CD8-positive, alpha-beta T cell (primary cell): ENCODE measurements at regions of chr21 and their contacts with region 1.

Region 1: GRCh38 chr21:31974454-31974985 is 101.7 kb downstream of the HUNK start:
- DNase-seq: peak; percentile 1 to 76 (median 41)
- ATAC-seq: peak; percentile 95
- H3K4me3 ChIP-seq: no peak overlapping the region
- H3K4me3 Mint-ChIP-seq: peak overlapping the region; percentile 50
- H3K27ac ChIP-seq: no peak overlapping the region
- H3K27ac Mint-ChIP-seq: peak overlapping the region; percentile 80
- H3K4me1 ChIP-seq: peaks cover 22% of the 10 kb centered on the region
- H3K4me1 Mint-ChIP-seq: peaks cover 30% of the 10 kb centered on the region
- H3K27me3 ChIP-seq: no peaks in the 10 kb centered on the region
- H3K27me3 Mint-ChIP-seq: no peaks in the 10 kb centered on the region
- CTCF ChIP-seq: no peak

Region 2: GRCh38 chr21:31927689-31928353 is 46.7 kb before region 1 on chr21:
- CTCF ChIA-PET with region 1: interaction called, 3 read pairs
- POLR2A ChIA-PET with region 1: no interaction called
- intact Hi-C with region 1: loop called in 1 of 2 experiments (anchors 1 kb)
- DNase-seq: no peak
- ATAC-seq: no peak
- H3K4me3 ChIP-seq: no peak overlapping the region
- H3K4me3 Mint-ChIP-seq: no peak overlapping the region
- H3K27ac ChIP-seq: no peak overlapping the region
- H3K27ac Mint-ChIP-seq: no peak overlapping the region
- H3K4me1 ChIP-seq: no peaks in the 10 kb centered on the region
- H3K4me1 Mint-ChIP-seq: no peaks in the 10 kb centered on the region
- H3K27me3 ChIP-seq: peaks cover 0 to 2% of the 10 kb centered on the region in 2 experiments
- H3K27me3 Mint-ChIP-seq: peaks cover 13% of the 10 kb centered on the region
- CTCF ChIP-seq: no peak

Region 3: DNA sequence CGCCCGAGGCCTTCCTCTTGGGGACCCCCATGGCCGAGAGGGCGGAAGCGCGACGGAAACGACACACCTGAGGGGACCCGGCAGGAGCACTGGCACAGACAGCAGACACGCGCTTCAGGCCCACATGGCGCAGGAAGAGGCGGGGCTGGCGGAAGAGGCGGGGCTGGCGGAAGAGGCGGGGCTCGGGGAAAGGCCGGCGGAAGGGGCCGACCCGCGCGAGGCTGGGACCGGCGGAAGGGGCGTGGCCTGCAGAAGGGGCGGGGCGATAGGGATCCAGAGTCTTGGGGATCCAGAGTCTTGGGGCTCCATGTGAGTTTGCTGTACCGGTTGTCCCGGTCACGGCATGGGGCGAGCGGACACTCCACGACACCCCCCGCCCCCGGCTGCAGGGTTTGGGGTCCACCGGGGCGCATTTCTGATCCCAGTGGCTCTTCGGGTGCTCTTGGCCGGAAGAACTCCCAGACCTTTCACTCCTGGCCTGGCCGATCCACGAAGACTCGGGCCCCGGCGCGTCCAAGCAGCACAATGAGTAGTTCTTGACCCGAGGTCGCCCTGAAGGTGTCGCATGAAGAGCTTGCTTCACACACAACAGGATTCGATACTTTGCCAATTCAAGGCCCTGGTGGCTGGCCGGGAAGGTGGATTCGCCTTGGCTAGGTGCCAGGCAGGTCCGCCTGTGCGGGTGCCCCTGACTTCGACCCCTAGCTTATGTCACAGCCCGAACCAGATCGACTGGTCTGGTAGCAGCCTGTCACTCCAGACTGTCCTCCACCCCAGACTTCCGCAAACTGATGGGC is 418.6 kb after region 1 on chr21 and contains the start of gene URB1:
- CTCF ChIA-PET with region 1: no interaction called
- POLR2A ChIA-PET with region 1: no interaction called
- intact Hi-C with region 1: no loop called
- DNase-seq: peak; percentile 89 to 98 (median 94)
- ATAC-seq: peak; percentile 97
- H3K4me3 ChIP-seq: peak within 1 kb of the TSS; percentile 94 to 98
- H3K4me3 Mint-ChIP-seq: peak within 1 kb of the TSS; percentile 89
- H3K27ac ChIP-seq: peak within 1 kb of the TSS; percentile 65 to 83
- H3K27ac Mint-ChIP-seq: peak within 1 kb of the TSS; percentile 80
- H3K4me1 ChIP-seq: peaks cover 13% of the 10 kb centered on the region
- H3K4me1 Mint-ChIP-seq: peaks cover 50% of the 10 kb centered on the region
- H3K27me3 ChIP-seq: no peaks in the 10 kb centered on the region
- H3K27me3 Mint-ChIP-seq: peaks cover 7% of the 10 kb centered on the region
- CTCF ChIP-seq: no peak
- total RNA-seq, gene URB1: 5.4 to 5.9 TPM